Testis (tissue), 5 donors: ENCODE measurements at regions of chr1 and their contacts with region 1.

Region 1: DNA sequence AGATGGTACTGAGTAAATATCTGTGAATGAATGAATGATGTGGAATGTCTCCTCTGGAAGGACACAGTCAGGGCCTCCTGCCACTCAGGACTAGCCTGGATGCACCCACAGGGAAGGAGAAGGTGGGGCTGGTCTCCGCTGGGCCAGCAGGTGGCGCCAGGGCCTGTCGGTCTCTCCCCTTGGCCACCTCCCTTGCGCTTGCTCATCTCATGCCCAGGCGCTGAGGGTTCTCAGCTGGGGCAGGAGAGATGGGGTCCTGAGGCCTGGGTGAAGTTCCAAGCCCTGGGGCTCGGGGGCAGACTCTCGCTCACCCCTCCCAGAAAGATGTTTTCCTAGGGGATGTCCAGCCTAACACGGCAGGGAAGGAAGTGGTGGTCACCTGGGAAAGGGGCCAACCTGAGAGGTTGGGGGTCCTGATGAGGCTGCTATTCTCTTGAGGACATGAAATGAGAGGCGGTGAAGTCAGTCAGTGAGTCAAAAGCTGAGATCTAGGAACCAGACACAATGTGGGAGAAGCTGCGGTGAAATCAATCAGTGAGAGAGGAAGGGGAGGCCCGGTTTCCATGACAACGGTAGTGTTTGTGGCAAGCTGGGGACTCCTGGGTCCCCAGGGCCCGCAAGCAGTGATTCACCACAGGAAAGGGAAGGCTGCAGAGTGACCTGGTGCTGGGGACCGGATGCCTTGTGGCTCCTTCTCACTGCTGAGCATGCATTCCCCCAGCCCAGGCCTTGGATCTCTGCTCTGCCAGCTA is 14.6 kb upstream of the MEX3A start:
- DNase-seq: peak; percentile 93
- H3K4me3 ChIP-seq: no peak overlapping the region
- H3K27ac ChIP-seq: peak overlapping the region in 1 of 2 donors; percentile 82
- H3K4me1 ChIP-seq: peaks cover 15% of the 10 kb centered on the region
- H3K27me3 ChIP-seq: no peaks in the 10 kb centered on the region
- CTCF ChIP-seq: peak; percentile 92 to 95 (median 93)
- POLR2A ChIP-seq: no peak

Region 2: DNA sequence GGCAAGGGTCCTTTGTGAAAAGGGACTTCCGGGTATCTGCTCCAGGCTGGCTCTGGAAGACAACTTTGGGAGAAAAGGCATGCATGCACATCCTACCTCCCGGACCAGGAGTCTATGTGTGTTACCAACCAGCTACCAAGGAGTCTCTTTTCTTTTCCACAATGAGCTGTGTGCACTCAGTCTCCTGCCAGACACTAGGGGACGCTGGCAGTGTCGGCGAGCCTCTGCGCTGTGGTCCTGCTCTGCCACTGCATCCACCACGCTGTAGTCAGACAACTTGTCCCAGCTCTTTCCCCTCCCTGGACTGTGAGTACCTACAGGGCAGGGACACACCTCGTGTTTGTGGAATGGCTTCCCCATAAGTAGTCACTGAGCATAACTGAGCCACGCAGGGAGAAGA is 70.9 kb before region 1 on chr1:
- intact Hi-C with region 1: no loop called
- DNase-seq: peak; percentile 46
- H3K4me3 ChIP-seq: no peak overlapping the region
- H3K27ac ChIP-seq: no peak overlapping the region
- H3K4me1 ChIP-seq: no peaks in the 10 kb centered on the region
- H3K27me3 ChIP-seq: no peaks in the 10 kb centered on the region
- CTCF ChIP-seq: peak in 1 of 3 experiments; percentile 34
- POLR2A ChIP-seq: no peak

Region 3: GRCh38 chr1:156136970-156137483 is 40.2 kb after region 1 on chr1:
- intact Hi-C with region 1: loop called (anchors 5 kb)
- DNase-seq: no peak
- H3K4me3 ChIP-seq: no peak overlapping the region
- H3K27ac ChIP-seq: no peak overlapping the region
- H3K4me1 ChIP-seq: peaks cover 11% of the 10 kb centered on the region
- H3K27me3 ChIP-seq: no peaks in the 10 kb centered on the region
- CTCF ChIP-seq: no peak
- POLR2A ChIP-seq: no peak